Mammary epithelial cell (primary cell): ENCODE measurements at regions of chr1 and their contacts with region 1.

Region 1: DNA sequence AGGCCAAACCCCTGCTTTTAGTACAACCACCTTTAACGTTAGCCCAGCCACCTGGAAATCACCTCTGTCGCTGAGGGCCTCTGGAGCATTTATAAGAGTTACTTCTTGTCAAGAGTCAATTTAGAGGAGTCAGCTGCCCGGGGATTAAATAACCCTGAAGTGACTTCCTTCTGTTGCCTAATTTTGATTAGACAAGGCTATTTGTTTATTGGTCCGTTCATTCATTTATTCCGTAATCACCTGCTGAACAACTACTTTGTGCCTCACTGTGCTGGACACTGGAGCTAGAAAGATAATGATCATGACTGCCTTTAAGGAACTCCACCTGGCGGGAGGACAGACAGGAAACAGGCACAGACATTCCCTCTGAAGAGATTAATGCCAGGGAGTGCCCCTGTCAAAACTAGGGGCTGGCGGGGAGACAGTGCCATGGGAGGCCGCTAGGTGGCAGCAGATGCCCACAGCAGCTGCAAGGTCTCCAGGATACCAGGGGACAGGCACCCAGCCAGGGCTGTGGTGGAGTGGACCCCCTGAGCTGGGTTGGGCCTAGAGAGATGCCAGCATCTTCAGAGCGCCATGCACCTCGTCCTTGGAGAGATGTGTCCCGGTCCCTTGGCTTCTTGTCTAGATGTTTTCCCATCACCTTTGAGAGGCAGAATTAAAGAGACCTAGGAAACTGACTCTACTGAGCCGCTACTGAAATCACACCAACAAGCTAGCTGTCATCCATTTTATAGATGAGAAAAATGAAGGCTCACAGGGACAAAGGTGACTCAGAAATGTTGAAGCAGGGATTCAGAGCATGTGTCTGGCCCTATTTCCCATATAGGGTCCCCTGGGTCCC is 3.7 kb downstream of the REN start:
- DNase-seq: peak; percentile 75
- H3K4me3 ChIP-seq: no peak overlapping the region
- H3K27ac ChIP-seq: no peak overlapping the region
- H3K4me1 ChIP-seq: peaks cover 10% of the 10 kb centered on the region
- H3K27me3 ChIP-seq: no peaks in the 10 kb centered on the region
- CTCF ChIP-seq: peak; percentile 99

Region 2: DNA sequence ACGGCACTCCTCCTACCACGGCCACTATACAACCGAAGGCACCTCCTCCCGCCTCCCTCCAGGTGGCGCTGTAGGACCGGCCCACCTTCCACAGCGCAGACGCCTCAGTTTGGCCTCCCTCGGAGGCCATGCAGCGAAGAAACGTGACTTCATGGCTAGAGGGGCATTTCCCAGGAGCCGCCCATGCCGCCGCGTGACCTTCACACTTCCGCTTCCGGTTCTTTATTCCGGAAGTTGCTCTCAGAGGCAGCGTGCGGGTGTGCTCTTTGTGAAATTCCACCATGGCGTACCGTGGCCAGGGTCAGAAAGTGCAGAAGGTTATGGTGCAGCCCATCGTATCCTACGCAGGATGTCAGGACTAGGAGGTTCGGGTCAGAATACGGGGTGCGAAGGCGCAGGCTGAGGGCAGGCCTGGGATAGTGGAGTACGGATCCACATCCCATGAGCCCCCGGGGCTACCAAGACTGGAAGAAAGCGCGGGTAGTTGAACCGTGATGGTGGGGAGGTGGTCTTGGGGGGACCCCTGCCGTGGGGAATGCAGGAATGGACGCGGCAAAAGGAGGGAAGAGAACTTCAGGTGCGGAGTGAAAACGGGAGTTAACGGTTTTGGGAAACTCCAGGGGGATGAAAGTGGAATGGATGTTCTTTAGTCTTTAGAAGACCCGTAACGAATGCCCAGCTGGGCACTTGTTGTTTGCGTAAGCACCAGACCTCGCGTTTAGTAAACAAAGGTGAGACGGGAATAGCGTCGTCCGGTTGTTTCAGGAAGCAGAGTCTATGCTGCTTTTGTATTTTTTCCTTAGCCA is 300.9 kb before region 1 on chr1 and contains the start of gene SNRPE:
- CTCF ChIA-PET with region 1: interaction called, 6 read pairs
- dilution Hi-C with region 1: no loop called
- in situ Hi-C with region 1: no loop called
- intact Hi-C with region 1: loop called (anchors 1 kb)
- DNase-seq: peak; percentile 97
- H3K4me3 ChIP-seq: peak within 1 kb of the TSS; percentile 59 to 92 (median 74)
- H3K27ac ChIP-seq: peak within 1 kb of the TSS; percentile 82
- H3K4me1 ChIP-seq: peaks cover 22% of the 10 kb centered on the region
- H3K27me3 ChIP-seq: no peaks in the 10 kb centered on the region
- CTCF ChIP-seq: peak; percentile 80 to 94
- total RNA-seq, gene SNRPE: 21.7 to 131 TPM

Region 3: DNA sequence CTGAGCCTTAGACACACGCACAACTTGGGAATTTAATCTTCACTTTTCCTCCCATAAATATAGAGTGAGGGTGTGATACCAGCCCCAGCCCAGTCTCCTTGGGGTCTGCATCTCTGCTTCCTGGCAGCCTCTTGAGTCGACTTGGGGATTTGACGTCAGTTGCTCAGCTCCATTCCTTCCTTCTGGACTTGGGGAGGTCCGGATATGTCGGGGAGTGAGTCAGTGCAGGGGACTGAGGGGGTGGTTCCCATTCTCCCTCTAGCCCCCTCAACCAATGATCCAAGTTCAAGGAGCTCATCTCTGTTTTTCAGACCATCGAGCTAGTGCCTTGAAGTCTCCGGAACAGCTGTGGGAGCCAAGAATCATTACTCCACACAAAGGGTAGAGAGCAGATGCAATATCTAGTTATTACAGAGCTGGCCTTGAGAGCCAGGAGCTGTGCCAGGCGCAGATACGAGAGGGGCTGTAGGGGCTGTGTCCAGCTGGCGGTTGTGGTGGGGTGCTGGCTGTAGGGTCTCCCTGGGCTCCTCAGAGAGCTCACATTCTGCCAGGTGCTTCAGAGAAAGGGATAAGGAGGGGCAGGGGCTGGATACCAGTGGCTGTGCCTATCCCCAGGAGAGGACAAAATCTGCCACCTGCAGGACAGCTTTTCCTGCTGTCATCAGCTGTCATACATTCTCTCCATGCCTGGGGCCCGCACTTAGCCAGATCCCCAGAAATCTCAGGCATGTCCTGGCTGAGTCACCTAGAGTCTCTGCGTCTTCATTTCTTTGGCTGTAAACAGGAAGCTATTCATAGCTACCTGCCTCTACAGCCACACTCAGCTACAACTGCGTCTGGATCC is 35.9 kb after region 1 on chr1:
- CTCF ChIA-PET with region 1: interaction called, 15 read pairs
- dilution Hi-C with region 1: loop called (anchors 5 kb)
- in situ Hi-C with region 1: no loop called
- intact Hi-C with region 1: loop called (anchors 1 kb)
- DNase-seq: peak; percentile 85
- H3K4me3 ChIP-seq: no peak overlapping the region
- H3K27ac ChIP-seq: peak overlapping the region; percentile 54
- H3K4me1 ChIP-seq: peaks cover 18% of the 10 kb centered on the region
- H3K27me3 ChIP-seq: no peaks in the 10 kb centered on the region
- CTCF ChIP-seq: peak in 1 of 2 donors; percentile 54

Region 4: GRCh38 chr1:204207136-204207616 is 44.7 kb after region 1 on chr1:
- CTCF ChIA-PET with region 1: interaction called, 5 read pairs
- dilution Hi-C with region 1: no loop called
- in situ Hi-C with region 1: loop called (anchors 5 kb)
- intact Hi-C with region 1: loop called (anchors 1 kb)
- DNase-seq: peak; percentile 24
- H3K4me3 ChIP-seq: no peak overlapping the region
- H3K27ac ChIP-seq: no peak overlapping the region
- H3K4me1 ChIP-seq: peaks cover 3% of the 10 kb centered on the region
- H3K27me3 ChIP-seq: no peaks in the 10 kb centered on the region
- CTCF ChIP-seq: peak; percentile 79 to 95

Region 5: DNA sequence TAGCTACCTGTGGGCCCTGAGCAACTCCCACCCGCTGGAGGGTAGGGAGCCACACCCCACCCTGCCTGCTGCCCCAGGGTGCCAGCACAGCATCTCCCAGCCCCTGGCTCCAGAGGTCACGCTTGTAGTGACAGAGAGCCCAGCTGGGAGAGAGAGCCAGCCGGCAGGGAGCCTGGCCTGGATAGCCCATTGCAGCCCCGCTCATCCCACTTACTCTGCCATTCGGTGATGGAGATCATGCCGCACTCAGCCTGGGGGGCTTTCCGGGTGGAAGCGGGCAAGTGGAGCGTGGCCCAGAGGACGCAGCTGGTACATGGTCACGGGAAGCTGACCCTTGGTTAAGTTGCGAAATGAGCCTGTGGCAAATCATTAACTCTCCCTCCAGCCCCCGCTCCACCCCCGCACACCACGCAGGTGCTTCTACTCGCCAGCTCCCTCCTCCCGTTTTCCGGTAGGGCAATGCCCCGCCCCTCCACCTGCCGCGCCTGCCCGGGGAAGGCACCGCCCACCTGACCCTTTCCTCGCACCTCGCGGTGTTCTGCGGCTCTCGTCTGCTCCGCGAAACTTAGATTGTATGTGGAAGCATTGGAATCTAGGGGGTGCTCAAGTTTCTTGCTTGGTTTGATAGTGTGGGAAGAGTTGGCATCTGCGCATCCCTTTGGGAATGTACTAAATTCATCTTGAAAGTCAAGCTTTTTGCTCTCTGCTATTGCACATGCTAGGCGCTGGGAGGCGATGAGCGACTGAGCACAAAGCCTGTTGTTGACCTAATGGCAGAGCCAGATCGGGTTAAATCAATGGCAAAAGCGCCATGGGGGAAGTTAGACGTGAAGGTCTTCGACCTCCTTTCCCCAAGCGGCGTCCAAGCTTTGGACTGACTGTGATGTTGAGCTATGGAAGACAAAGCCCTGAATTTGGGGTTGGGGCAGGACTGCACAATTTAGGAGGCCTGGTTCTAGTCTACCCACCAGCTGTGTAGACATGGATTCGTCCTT is 51.5 kb after region 1 on chr1 and contains the start of gene GOLT1A:
- CTCF ChIA-PET with region 1: no interaction called
- dilution Hi-C with region 1: no loop called
- in situ Hi-C with region 1: loop called (anchors 5 kb)
- intact Hi-C with region 1: loop called (anchors 2 kb)
- DNase-seq: peak; percentile 73
- H3K4me3 ChIP-seq: peak within 1 kb of the TSS; percentile 1 to 38 (median 34)
- H3K27ac ChIP-seq: no peak within 1 kb of the TSS
- H3K4me1 ChIP-seq: peaks cover 11% of the 10 kb centered on the region
- H3K27me3 ChIP-seq: no peaks in the 10 kb centered on the region
- CTCF ChIP-seq: peak; percentile 76 to 77
- total RNA-seq, gene GOLT1A: 0.59 TPM in 1 of 2 donors, not detected in the other

Region 6: GRCh38 chr1:204257954-204258752 is 95.7 kb after region 1 on chr1:
- CTCF ChIA-PET with region 1: no interaction called
- dilution Hi-C with region 1: no loop called
- in situ Hi-C with region 1: no loop called
- intact Hi-C with region 1: loop called (anchors 2 kb)
- DNase-seq: peak; percentile 15
- H3K4me3 ChIP-seq: no peak overlapping the region
- H3K27ac ChIP-seq: no peak overlapping the region
- H3K4me1 ChIP-seq: no peaks in the 10 kb centered on the region
- H3K27me3 ChIP-seq: no peaks in the 10 kb centered on the region
- CTCF ChIP-seq: peak; percentile 68 to 84

Region 7: DNA sequence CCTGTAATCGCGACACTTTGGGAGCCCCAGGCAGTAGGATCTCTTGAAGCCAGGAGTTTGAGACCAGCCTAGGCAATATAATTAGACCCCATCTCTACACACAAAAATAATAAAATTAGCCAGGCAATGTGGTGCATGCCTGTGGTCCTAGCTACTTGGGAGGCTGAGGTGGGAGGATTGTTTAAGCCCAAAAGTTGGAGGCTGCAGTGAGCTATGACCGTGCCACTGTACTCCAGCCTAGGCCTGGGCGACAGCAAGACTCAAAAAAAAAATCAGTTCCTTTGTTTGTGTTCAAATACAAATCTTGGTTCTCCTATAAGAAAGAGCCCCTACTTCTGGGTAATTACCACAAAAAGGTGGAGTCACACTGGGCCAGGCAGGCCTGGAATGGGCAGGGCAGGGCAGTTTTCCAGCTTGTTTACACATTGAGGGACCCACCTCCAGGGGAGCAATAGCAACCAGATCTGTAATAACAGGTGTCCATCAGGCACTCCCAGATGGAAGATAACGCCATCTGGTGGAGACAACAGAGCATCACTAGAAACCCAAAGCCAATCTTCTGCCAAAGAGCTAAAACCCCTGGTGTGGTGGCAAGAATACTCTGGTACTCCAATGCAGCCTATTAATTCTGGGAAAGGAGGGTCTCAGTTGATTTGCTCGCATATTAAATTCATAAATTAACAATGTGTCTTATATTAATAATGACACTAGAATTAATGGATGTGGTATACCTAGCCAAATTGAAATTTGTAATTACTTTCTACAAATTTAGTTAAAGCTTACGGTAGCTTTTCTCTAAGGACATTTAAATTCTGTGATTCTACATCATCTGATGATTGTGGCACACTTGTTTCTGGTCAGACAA is 236.0 kb after region 1 on chr1:
- CTCF ChIA-PET with region 1: interaction called, 20 read pairs
- dilution Hi-C with region 1: no loop called
- in situ Hi-C with region 1: no loop called
- intact Hi-C with region 1: no loop called
- DNase-seq: peak; percentile 75
- H3K4me3 ChIP-seq: no peak overlapping the region
- H3K27ac ChIP-seq: no peak overlapping the region
- H3K4me1 ChIP-seq: no peaks in the 10 kb centered on the region
- H3K27me3 ChIP-seq: no peaks in the 10 kb centered on the region
- CTCF ChIP-seq: peak; percentile 90